GM10248 (cell line): ENCODE measurements at regions of chr18 and their contacts with region 1.

Region 1: GRCh38 chr18:12376718-12377555 is at the start of gene AFG3L2:
- DNase-seq: peak; percentile 99
- CTCF ChIP-seq: no peak

Region 2: GRCh38 chr18:12361770-12362378 is 15.1 kb before region 1 on chr18:
- CTCF ChIA-PET with region 1: interaction called, 10 read pairs
- POLR2A ChIA-PET with region 1: interaction called, 5 read pairs
- DNase-seq: no peak
- CTCF ChIP-seq: no peak